Activated CD4-positive, alpha-beta memory T cell treated with anti-CD3 and anti-CD28 coated beads, Interleukin-2, amount 10 ng/mL, durations not matched to agents 7 days and 5 days (primary cell): ENCODE measurements at regions of chr11 and their contacts with region 1.

Region 1: DNA sequence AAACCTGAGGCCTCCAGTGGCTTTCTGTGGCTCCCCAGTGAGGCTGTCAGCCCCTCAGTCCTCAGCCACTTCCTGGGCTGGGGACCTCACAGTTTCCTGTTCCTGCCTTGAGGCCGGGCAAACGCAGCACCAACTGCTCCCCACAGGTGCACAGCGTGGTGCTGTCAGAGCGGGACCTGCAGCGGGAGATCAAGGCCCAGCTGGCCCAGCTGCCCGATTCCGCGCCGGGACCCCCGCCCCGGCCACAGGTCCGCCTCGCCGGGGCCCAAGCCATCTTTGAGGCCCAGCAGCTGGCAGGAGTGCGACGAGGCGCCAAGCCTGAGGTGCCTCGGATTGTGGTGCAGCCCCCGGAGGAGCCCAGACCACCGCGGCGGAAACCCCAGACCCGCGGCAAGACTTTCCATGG is 5.4 kb downstream of the TBC1D10C start:
- DNase-seq: peak; percentile 90
- H3K4me3 Mint-ChIP-seq: peak overlapping the region; percentile 85
- H3K27ac Mint-ChIP-seq: peak overlapping the region; percentile 99
- H3K4me1 Mint-ChIP-seq: peaks cover 77% of the 10 kb centered on the region
- H3K27me3 Mint-ChIP-seq: peaks cover 4% of the 10 kb centered on the region

Region 2: GRCh38 chr11:67391304-67392132 is 17.7 kb before region 1 on chr11 and contains the start of gene RAD9A:
- CTCF ChIA-PET with region 1: interaction called, 5 read pairs
- POLR2A ChIA-PET with region 1: interaction called, 97 read pairs
- DNase-seq: peak; percentile 95
- H3K4me3 Mint-ChIP-seq: peak within 1 kb of the TSS; percentile 94
- H3K27ac Mint-ChIP-seq: peak within 1 kb of the TSS; percentile 81
- H3K4me1 Mint-ChIP-seq: peaks cover 44% of the 10 kb centered on the region
- H3K27me3 Mint-ChIP-seq: no peaks in the 10 kb centered on the region
- total RNA-seq, gene RAD9A: 48.0 to 53.9 TPM

Region 3: GRCh38 chr11:67420646-67421420 is 11.6 kb after region 1 on chr11:
- CTCF ChIA-PET with region 1: interaction called, 10 read pairs
- POLR2A ChIA-PET with region 1: interaction called, 155 read pairs
- DNase-seq: peak; percentile 97
- H3K4me3 Mint-ChIP-seq: peak overlapping the region; percentile 71
- H3K27ac Mint-ChIP-seq: no peak overlapping the region
- H3K4me1 Mint-ChIP-seq: peaks cover 56% of the 10 kb centered on the region
- H3K27me3 Mint-ChIP-seq: peaks cover 12% of the 10 kb centered on the region

Region 4: GRCh38 chr11:67428052-67428914 is 19.0 kb after region 1 on chr11 and contains the start of gene RPS6KB2:
- CTCF ChIA-PET with region 1: interaction called, 9 read pairs
- POLR2A ChIA-PET with region 1: interaction called, 361 read pairs
- DNase-seq: peak; percentile 100
- H3K4me3 Mint-ChIP-seq: peak within 1 kb of the TSS; percentile 95
- H3K27ac Mint-ChIP-seq: peak within 1 kb of the TSS; percentile 94
- H3K4me1 Mint-ChIP-seq: peaks cover 59% of the 10 kb centered on the region
- H3K27me3 Mint-ChIP-seq: no peaks in the 10 kb centered on the region
- total RNA-seq, gene RPS6KB2: 56.9 to 57.1 TPM

Region 5: DNA sequence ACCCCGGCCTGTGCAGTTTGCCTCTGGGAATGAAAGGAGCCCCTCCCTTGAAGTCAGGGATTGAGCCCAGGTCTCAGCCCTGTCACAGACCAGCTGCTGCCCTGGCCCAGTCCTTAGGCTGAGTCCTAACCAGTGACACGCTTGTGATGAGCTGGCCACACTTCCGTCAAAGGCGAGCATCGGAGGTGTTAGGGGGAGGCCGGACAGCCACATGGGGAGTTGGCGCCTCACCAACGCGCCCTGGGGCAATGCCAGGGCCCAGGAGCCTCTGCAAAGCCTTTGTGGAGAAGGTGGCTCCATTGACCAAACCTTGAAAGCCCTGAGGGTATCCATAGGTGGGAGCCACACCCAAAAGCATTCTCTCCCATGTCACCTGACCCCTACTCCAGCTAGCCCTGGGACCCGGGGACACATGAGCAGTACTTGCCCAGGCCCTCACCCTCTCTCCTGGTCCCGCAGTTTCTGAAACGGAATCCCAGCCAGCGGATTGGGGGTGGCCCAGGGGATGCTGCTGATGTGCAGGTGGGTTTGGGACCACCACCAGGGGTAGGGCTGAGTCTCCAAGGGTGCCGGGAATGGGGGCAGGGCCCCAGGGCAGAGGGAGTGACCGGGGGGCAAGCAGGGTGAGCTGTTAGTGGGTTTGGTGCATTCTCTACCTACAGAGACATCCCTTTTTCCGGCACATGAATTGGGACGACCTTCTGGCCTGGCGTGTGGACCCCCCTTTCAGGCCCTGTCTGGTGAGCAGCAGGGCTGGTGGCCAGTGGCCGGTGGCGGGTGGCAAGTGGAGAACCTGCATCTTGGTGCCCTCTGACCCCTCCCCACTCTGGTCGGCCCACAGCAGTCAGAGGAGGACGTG is 24.5 kb after region 1 on chr11:
- CTCF ChIA-PET with region 1: interaction called, 67 read pairs
- POLR2A ChIA-PET with region 1: interaction called, 361 read pairs
- DNase-seq: no peak
- H3K4me3 Mint-ChIP-seq: peak overlapping the region; percentile 94
- H3K27ac Mint-ChIP-seq: peak overlapping the region; percentile 73
- H3K4me1 Mint-ChIP-seq: peaks cover 65% of the 10 kb centered on the region
- H3K27me3 Mint-ChIP-seq: no peaks in the 10 kb centered on the region

Region 6: GRCh38 chr11:67482825-67483798 is 73.8 kb after region 1 on chr11 and contains the start of gene AIP:
- CTCF ChIA-PET with region 1: interaction called, 5 read pairs
- POLR2A ChIA-PET with region 1: interaction called, 50 read pairs
- DNase-seq: peak; percentile 98
- H3K4me3 Mint-ChIP-seq: peak within 1 kb of the TSS; percentile 89
- H3K27ac Mint-ChIP-seq: peak within 1 kb of the TSS; percentile 99
- H3K4me1 Mint-ChIP-seq: peaks cover 55% of the 10 kb centered on the region
- H3K27me3 Mint-ChIP-seq: no peaks in the 10 kb centered on the region
- total RNA-seq, gene AIP: 152 to 159 TPM